Sigmoid colon (tissue), 7 donors: ENCODE measurements at regions of chr1 and their contacts with region 1.

Region 1: GRCh38 chr1:46036894-46037839 is 95.3 kb downstream of the PIK3R3 start:
- DNase-seq: peak; percentile 91
- H3K4me3 ChIP-seq: no peak overlapping the region
- H3K27ac ChIP-seq: peak overlapping the region in 3 of 4 donors; percentile 7 to 40 (median 20)
- H3K4me1 ChIP-seq: peaks cover 0 to 9% (median 4%) of the 10 kb centered on the region in 4 donors
- H3K27me3 ChIP-seq: no peaks in the 10 kb centered on the region
- CTCF ChIP-seq: peak; percentile 79 to 95 (median 95)
- EP300 ChIP-seq: no peak
- POLR2A ChIP-seq: no peak

Region 2: DNA sequence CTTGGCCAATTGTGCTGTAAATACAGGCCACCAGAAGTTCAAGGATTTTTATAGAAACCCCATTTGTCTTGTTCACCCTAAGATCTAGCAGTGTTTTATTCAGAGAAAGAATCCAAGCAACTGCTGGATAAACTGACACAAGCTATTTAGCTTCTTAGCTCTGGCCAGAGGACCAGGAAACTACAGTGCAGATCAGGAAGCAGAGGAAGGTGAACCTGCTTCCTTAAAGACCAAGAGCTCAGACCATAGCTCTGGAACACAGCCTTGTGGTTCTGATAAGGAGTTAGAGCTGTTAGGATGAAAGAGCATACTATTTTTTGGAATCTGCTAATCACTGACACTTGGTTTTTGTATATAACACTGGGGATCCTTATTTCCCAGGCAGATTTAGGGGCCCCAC is 408.1 kb before region 1 on chr1:
- intact Hi-C with region 1: no loop called
- DNase-seq: no peak
- H3K4me3 ChIP-seq: no peak overlapping the region
- H3K27ac ChIP-seq: no peak overlapping the region
- H3K4me1 ChIP-seq: no peaks in the 10 kb centered on the region
- H3K27me3 ChIP-seq: no peaks in the 10 kb centered on the region
- CTCF ChIP-seq: no peak
- EP300 ChIP-seq: no peak
- POLR2A ChIP-seq: no peak

Region 3: DNA sequence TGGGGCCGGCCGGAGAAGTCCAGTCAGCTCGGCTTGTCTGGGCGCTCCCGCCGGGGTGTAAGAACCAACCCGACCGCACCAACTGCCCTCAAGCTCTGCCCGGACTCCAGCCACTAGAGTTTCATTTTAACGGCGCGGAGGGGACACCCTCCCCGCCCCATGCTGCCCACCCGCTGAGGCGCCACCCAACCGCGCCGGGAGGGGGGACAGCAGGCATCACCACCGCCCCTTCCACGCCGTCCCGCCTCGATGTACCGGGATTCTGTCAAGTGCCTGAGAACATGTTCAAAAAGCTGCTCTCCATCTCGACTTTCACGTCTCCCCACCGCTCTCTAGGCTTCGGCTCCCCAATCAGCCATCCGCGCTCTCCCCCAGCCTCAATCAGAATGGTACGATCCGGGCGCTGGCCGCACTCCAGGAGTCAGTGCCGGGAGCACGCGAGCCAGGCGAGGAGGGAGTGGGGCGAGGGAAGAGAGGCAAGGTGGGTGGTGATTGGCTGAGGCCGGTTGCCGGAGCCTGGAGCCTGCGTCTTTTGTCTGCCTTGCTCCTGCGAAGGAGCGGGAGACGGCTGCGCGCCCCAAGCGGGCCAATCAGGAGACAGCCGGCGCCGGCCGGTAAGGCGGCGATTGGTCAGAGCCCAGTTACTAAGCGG is 95.5 kb after region 1 on chr1 and contains the start of gene PIK3R3:
- intact Hi-C with region 1: loop called (anchors 5 kb)
- DNase-seq: peak; percentile 99
- H3K4me3 ChIP-seq: peak within 1 kb of the TSS; percentile 37 to 72 (median 68)
- H3K27ac ChIP-seq: peak within 1 kb of the TSS; percentile 91 to 94 (median 92)
- H3K4me1 ChIP-seq: peaks cover 0 to 32% (median 15%) of the 10 kb centered on the region in 4 donors
- H3K27me3 ChIP-seq: peaks cover 0 to 11% (median 0%) of the 10 kb centered on the region in 3 donors
- CTCF ChIP-seq: no peak
- EP300 ChIP-seq: no peak
- POLR2A ChIP-seq: peak; percentile 90 to 94
- total RNA-seq, gene PIK3R3: 6.2 to 11.6 (median 9.4) TPM

Region 4: GRCh38 chr1:46179138-46180081 is 142.2 kb after region 1 on chr1:
- intact Hi-C with region 1: loop called (anchors 1 kb)
- DNase-seq: peak; percentile 92
- H3K4me3 ChIP-seq: no peak overlapping the region
- H3K27ac ChIP-seq: peak overlapping the region in 2 of 4 donors; percentile 5
- H3K4me1 ChIP-seq: peaks cover 0 to 22% (median 12%) of the 10 kb centered on the region in 4 donors
- H3K27me3 ChIP-seq: no peaks in the 10 kb centered on the region
- CTCF ChIP-seq: peak; percentile 92 to 99 (median 96)
- EP300 ChIP-seq: no peak
- POLR2A ChIP-seq: no peak

Region 5: GRCh38 chr1:46197964-46198811 is 161.0 kb after region 1 on chr1 and contains the start of gene POMGNT1:
- intact Hi-C with region 1: no loop called
- DNase-seq: peak; percentile 75
- H3K4me3 ChIP-seq: peak within 1 kb of the TSS; percentile 64 to 93 (median 82)
- H3K27ac ChIP-seq: peak within 1 kb of the TSS; percentile 65 to 87 (median 84)
- H3K4me1 ChIP-seq: peaks cover 0 to 31% (median 27%) of the 10 kb centered on the region in 4 donors
- H3K27me3 ChIP-seq: no peaks in the 10 kb centered on the region
- CTCF ChIP-seq: no peak
- EP300 ChIP-seq: no peak
- POLR2A ChIP-seq: peak in 1 of 2 donors; percentile 20
- total RNA-seq, gene POMGNT1: 29.9 to 37.4 (median 33.5) TPM

Region 6: DNA sequence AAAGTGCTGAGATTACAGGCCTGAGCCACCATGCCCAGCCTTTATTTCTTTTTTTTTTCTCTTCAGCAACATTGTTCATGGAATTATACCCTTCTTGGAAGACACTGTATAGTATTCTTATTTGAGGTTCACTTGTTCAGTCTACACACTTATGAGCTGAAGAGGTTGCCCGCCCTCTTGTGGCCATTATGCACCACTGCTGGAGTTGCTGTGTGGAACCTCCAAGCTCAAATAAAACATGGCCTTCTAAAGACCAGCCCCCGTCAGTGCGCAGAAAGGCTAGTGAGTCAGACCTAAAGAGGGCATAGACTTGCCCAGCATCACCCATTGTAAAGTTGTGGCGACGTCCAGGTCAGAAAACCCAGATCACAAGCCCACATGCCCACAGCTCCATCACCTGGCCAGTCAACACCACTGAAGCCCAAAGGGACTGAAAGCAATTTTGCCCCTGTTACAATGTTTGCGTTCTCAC is 186.3 kb after region 1 on chr1:
- intact Hi-C with region 1: loop called (anchors 1 kb)
- DNase-seq: peak; percentile 86
- H3K4me3 ChIP-seq: no peak overlapping the region
- H3K27ac ChIP-seq: no peak overlapping the region
- H3K4me1 ChIP-seq: peaks cover 0 to 9% (median 4%) of the 10 kb centered on the region in 4 donors
- H3K27me3 ChIP-seq: no peaks in the 10 kb centered on the region
- CTCF ChIP-seq: peak; percentile 67 to 84 (median 82)
- EP300 ChIP-seq: no peak
- POLR2A ChIP-seq: no peak

Region 7: GRCh38 chr1:46556822-46557221 is 519.7 kb after region 1 on chr1:
- intact Hi-C with region 1: no loop called
- DNase-seq: no peak
- H3K4me3 ChIP-seq: no peak overlapping the region
- H3K27ac ChIP-seq: no peak overlapping the region
- H3K4me1 ChIP-seq: no peaks in the 10 kb centered on the region
- H3K27me3 ChIP-seq: no peaks in the 10 kb centered on the region
- CTCF ChIP-seq: no peak
- EP300 ChIP-seq: no peak
- POLR2A ChIP-seq: no peak